Psoas muscle (tissue), 8 donors: ENCODE measurements at regions of chr6 and their contacts with region 1.

Region 1: GRCh38 chr6:116287689-116288282 is 8.1 kb upstream of the TSPYL1 start:
- DNase-seq: no peak
- ATAC-seq: peak; percentile 65 to 87 (median 74)
- H3K4me3 ChIP-seq: no peak overlapping the region
- H3K27ac ChIP-seq: no peak overlapping the region
- H3K4me1 ChIP-seq: peaks cover 2% of the 10 kb centered on the region
- H3K27me3 ChIP-seq: no peaks in the 10 kb centered on the region
- CTCF ChIP-seq: peak; percentile 92

Region 2: DNA sequence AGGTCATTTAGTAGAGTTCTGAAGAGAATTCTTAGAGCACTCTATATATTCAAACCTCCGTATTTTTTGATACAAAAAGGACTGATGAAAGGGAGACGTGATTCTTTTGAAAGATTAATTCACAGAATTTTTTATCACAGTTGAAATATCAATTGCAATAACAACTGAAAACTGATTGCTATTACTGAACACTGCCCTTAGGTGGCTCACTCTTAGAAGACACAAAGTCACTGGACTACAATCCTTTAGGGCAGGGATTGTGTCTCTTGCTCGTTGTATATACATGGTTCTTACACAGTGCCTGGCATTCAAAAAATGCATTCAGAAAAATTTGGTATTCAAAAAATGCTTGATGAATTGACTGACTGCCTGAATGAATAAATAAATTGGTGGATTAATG is 156.3 kb after region 1 on chr6:
- intact Hi-C with region 1: loop called in 1 of 2 experiments (anchors 5 kb)
- DNase-seq: no peak
- ATAC-seq: peak in 1 of 4 donors; percentile 74
- H3K4me3 ChIP-seq: no peak overlapping the region
- H3K27ac ChIP-seq: no peak overlapping the region
- H3K4me1 ChIP-seq: no peaks in the 10 kb centered on the region
- H3K27me3 ChIP-seq: no peaks in the 10 kb centered on the region
- CTCF ChIP-seq: peak; percentile 45

Region 3: GRCh38 chr6:116561377-116562018 is 273.7 kb after region 1 on chr6:
- intact Hi-C with region 1: loop called in 1 of 2 experiments (anchors 2 kb)
- DNase-seq: peak; percentile 67 to 80
- ATAC-seq: peak; percentile 40 to 80 (median 65)
- H3K4me3 ChIP-seq: peak overlapping the region; percentile 53
- H3K27ac ChIP-seq: no peak overlapping the region
- H3K4me1 ChIP-seq: peaks cover 9% of the 10 kb centered on the region
- H3K27me3 ChIP-seq: no peaks in the 10 kb centered on the region
- CTCF ChIP-seq: peak; percentile 96

Region 4: DNA sequence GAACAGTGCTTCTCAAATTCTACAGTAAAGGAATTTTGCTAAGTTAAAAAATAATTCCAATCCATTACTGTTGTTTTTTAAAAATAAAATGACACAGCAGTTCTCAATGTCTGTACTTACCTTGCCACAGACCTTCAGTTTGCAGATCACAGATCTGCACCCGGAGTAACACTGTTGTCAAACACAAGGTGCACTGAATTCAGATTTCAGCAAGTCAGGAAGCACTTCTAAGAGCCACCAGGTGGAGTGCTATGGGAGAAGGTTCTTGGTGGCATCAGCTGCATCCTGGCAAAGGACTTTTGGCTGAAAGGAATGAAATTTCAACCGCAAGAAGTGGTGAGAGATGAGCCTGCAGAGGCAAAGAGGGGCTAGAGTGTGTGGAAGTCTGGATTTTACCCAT is 345.9 kb after region 1 on chr6:
- intact Hi-C with region 1: no loop called
- DNase-seq: no peak
- ATAC-seq: no peak
- H3K4me3 ChIP-seq: no peak overlapping the region
- H3K27ac ChIP-seq: no peak overlapping the region
- H3K4me1 ChIP-seq: no peaks in the 10 kb centered on the region
- H3K27me3 ChIP-seq: no peaks in the 10 kb centered on the region
- CTCF ChIP-seq: no peak

Region 5: DNA sequence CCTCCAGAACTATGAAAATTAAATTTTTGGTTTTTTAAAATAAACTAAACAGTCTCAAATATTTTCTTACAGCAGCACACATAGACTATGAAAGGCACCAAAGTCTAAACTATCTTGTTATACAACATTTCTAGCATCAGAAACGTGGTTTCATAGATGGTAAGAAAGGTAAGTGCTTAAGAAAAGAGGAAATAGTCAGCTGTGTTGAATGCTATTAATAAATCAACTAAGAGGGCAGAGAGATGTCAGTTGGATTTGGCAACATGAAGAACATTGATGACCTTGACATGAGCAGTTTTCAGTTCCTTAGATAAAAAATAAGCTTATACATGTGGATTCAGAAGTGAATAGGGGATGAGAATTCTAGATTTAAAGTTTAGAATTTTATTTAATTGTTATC is 702.9 kb after region 1 on chr6:
- intact Hi-C with region 1: no loop called
- DNase-seq: no peak
- ATAC-seq: peak in 1 of 4 donors; percentile 48
- H3K4me3 ChIP-seq: no peak overlapping the region
- H3K27ac ChIP-seq: no peak overlapping the region
- H3K4me1 ChIP-seq: peaks cover 19% of the 10 kb centered on the region
- H3K27me3 ChIP-seq: no peaks in the 10 kb centered on the region
- CTCF ChIP-seq: no peak